Mucosa of descending colon (tissue), 3 donors: ENCODE measurements at regions of chr12 and their contacts with region 1.

Region 1: GRCh38 chr12:117212563-117213190 is 22.4 kb upstream of the FBXO21 start:
- DNase-seq: peak in 2 of 3 donors; percentile 50 to 87
- ATAC-seq: peak; percentile 73
- H3K4me3 ChIP-seq: no peak overlapping the region
- H3K4me1 ChIP-seq: no peaks in the 10 kb centered on the region
- CTCF ChIP-seq: peak; percentile 80

Region 2: DNA sequence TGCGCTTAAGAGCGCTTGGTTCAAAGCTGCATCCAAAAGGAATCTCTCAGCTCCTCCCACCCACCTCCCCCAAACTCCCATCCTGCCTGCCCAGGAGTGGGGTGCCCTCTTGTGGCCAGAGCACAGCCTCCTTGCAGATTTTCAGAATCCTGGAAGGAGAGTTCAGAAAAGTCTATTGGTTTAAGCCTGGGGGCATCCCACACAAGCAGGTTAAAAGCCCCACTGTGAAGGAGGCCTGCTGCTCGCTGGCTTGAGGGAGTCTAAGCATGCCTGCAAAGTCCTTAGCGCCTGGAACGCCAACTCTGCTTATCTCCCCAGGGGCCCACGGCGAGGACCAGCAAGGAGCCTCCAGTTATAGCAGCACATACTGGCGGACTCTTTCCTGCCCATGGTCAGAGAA is 459.1 kb after region 1 on chr12:
- intact Hi-C with region 1: no loop called
- DNase-seq: peak in 2 of 3 donors; percentile 31 to 40
- ATAC-seq: no peak
- H3K4me3 ChIP-seq: no peak overlapping the region
- H3K4me1 ChIP-seq: no peaks in the 10 kb centered on the region
- CTCF ChIP-seq: no peak

Region 3: GRCh38 chr12:117836999-117837736 is 624.5 kb after region 1 on chr12:
- intact Hi-C with region 1: loop called in 1 of 2 experiments (anchors 10 kb)
- DNase-seq: peak; percentile 69 to 90 (median 86)
- ATAC-seq: peak; percentile 89
- H3K4me3 ChIP-seq: no peak overlapping the region
- H3K4me1 ChIP-seq: no peaks in the 10 kb centered on the region
- CTCF ChIP-seq: peak; percentile 90

Region 4: GRCh38 chr12:117857632-117858612 is 645.2 kb after region 1 on chr12:
- intact Hi-C with region 1: loop called in 1 of 2 experiments (anchors 10 kb)
- DNase-seq: peak in 1 of 3 donors; percentile 63
- ATAC-seq: peak; percentile 56
- H3K4me3 ChIP-seq: no peak overlapping the region
- H3K4me1 ChIP-seq: no peaks in the 10 kb centered on the region
- CTCF ChIP-seq: no peak